GM12878 (cell line): ENCODE measurements at regions of chrX and their contacts with region 1.

Region 1: DNA sequence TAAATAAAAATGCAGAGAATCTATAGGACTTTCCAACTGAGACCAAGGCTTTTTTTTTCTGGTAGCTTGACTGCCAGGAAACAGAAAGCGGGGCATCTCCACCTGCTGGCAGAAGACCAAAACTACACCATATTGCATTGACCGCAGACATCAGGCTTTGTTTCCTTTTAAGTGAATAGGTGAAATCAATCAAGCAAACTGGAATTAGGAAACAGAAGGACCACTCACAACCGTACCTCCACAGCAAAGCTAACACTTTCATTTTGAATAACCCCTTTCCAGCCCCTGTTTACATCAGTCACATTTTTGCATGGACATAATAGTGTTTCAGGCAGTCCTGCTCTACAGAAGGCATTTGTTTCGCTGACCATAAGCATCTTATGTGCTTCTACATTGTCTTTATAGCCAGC is 218.2 kb downstream of the IDS start:
- DNase-seq: peak; percentile 40
- ATAC-seq: peak; percentile 76
- H3K4me3 ChIP-seq: no peak overlapping the region
- H3K27ac ChIP-seq: no peak overlapping the region
- H3K4me1 ChIP-seq: no peaks in the 10 kb centered on the region
- H3K27me3 ChIP-seq: no peaks in the 10 kb centered on the region
- CTCF ChIP-seq: peak; percentile 73 to 85 (median 73)
- EP300 ChIP-seq: no peak
- POLR2A ChIP-seq: no peak
- RAD21 ChIP-seq: peak; percentile 83

Region 2: DNA sequence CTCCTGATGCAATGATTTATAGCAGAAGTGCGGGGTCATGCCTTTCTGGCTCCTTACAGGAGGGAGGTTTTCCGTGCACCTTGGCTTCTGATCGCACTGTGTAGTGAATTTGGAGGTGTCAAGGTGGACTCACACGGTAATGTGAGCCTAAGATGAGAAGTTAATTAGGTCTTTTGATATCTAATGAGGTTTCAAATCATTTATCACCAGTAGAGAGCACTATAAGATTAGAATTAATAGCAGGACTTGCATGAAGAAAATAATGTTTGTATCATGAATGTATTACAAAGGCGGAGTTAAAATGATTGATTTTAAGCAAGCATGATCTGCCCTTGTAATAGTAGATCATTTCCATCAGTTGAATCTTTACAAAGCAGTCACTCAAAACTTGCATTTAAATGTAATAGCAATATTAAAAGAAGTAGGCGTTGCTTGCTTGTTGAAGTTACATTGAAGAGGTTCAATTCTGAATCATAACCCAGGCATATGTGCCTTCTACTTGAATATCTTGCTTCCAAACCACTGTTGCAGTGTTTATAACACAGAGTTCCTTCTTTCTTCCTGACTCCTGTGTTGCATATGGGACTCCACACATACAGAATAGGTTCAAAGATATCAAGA is 1153.7 kb before region 1 on chrX:
- CTCF ChIA-PET with region 1: no interaction called
- POLR2A ChIA-PET with region 1: no interaction called
- RAD21 ChIA-PET with region 1: interaction called, 4 read pairs
- SMC1A ChIA-PET with region 1: no interaction called
- in situ Hi-C with region 1: no loop called
- intact Hi-C with region 1: loop called (anchors 10 kb)
- DNase-seq: no peak
- ATAC-seq: no peak
- H3K4me3 ChIP-seq: no peak overlapping the region
- H3K27ac ChIP-seq: no peak overlapping the region
- H3K4me1 ChIP-seq: no peaks in the 10 kb centered on the region
- H3K27me3 ChIP-seq: no peaks in the 10 kb centered on the region
- CTCF ChIP-seq: no peak; a peak in 1 of 6 replicates
- EP300 ChIP-seq: no peak
- POLR2A ChIP-seq: no peak
- RAD21 ChIP-seq: 0 out of 2 replicates have a peak, but pooled peaks have one; percentile 20

Region 3: GRCh38 chrX:148629434-148629833 is 657.5 kb before region 1 on chrX:
- CTCF ChIA-PET with region 1: no interaction called
- POLR2A ChIA-PET with region 1: no interaction called
- RAD21 ChIA-PET with region 1: no interaction called
- SMC1A ChIA-PET with region 1: no interaction called
- in situ Hi-C with region 1: no loop called
- intact Hi-C with region 1: no loop called
- DNase-seq: no peak
- ATAC-seq: no peak
- H3K4me3 ChIP-seq: no peak overlapping the region
- H3K27ac ChIP-seq: no peak overlapping the region
- H3K4me1 ChIP-seq: no peaks in the 10 kb centered on the region
- H3K27me3 ChIP-seq: no peaks in the 10 kb centered on the region
- CTCF ChIP-seq: no peak
- EP300 ChIP-seq: no peak
- POLR2A ChIP-seq: no peak
- RAD21 ChIP-seq: no peak

Region 4: DNA sequence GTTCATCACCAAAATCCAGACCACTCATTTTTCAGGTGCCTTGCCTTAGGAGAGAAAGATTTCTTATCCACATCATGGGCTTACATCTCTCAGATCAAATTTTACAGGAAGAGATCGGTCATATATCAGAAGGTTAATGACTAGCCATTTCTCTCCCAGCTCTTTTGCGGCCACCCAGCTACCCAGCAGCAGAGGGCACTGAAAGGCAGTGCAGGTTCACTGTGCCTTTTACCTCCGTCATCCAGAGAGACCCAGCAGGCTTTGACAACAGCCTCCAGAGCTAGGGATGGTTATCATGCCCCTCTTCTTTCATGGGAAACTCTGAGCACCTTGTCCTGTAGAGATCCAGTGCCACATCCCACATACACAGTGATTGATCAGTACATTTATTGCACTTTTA is 401.7 kb before region 1 on chrX:
- CTCF ChIA-PET with region 1: interaction called, 32 read pairs
- POLR2A ChIA-PET with region 1: no interaction called
- RAD21 ChIA-PET with region 1: interaction called, 22 read pairs
- SMC1A ChIA-PET with region 1: interaction called, 45 read pairs
- in situ Hi-C with region 1: no loop called
- intact Hi-C with region 1: loop called (anchors 5 kb)
- DNase-seq: no peak
- ATAC-seq: peak; percentile 61
- H3K4me3 ChIP-seq: no peak overlapping the region
- H3K27ac ChIP-seq: no peak overlapping the region
- H3K4me1 ChIP-seq: no peaks in the 10 kb centered on the region
- H3K27me3 ChIP-seq: no peaks in the 10 kb centered on the region
- CTCF ChIP-seq: peak in 1 of 3 experiments; percentile 27; a peak in 3 of 6 replicates
- EP300 ChIP-seq: no peak
- POLR2A ChIP-seq: no peak
- RAD21 ChIP-seq: peak; percentile 44

Region 5: GRCh38 chrX:149145845-149146285 is 141.1 kb before region 1 on chrX:
- CTCF ChIA-PET with region 1: interaction called, 12 read pairs
- POLR2A ChIA-PET with region 1: interaction called, 3 read pairs
- RAD21 ChIA-PET with region 1: interaction called, 20 read pairs
- SMC1A ChIA-PET with region 1: interaction called, 21 read pairs
- in situ Hi-C with region 1: no loop called
- intact Hi-C with region 1: loop called (anchors 5 kb)
- DNase-seq: no peak
- ATAC-seq: peak; percentile 92
- H3K4me3 ChIP-seq: no peak overlapping the region
- H3K27ac ChIP-seq: no peak overlapping the region
- H3K4me1 ChIP-seq: no peaks in the 10 kb centered on the region
- H3K27me3 ChIP-seq: no peaks in the 10 kb centered on the region
- CTCF ChIP-seq: no peak
- EP300 ChIP-seq: peak in 1 of 2 experiments; percentile 17; a peak in 1 of 4 replicates
- POLR2A ChIP-seq: no peak
- RAD21 ChIP-seq: no peak

Region 6: DNA sequence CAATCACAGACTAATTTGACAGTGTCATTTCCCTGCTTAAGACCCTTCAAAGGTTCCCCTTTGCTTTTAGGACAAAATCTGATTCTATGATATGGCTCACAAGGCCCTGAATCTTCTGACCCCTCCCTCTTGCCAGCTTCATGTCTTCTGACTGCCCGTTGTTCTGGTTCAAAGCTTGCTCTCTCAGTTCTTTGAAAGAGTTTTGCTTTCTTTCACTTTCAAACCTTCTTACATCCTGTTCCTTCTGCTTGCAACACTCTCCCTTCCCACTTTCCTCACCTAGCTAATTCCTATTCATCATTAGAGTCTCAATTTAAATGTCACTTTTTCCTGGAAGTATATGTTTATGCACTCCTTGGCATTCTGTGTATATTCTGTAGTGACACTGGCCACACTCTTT is 81.0 kb before region 1 on chrX:
- CTCF ChIA-PET with region 1: interaction called, 19 read pairs
- POLR2A ChIA-PET with region 1: interaction called, 10 read pairs
- RAD21 ChIA-PET with region 1: interaction called, 47 read pairs
- SMC1A ChIA-PET with region 1: interaction called, 54 read pairs
- in situ Hi-C with region 1: no loop called
- intact Hi-C with region 1: loop called (anchors 2 kb)
- DNase-seq: no peak
- ATAC-seq: peak; percentile 59
- H3K4me3 ChIP-seq: no peak overlapping the region
- H3K27ac ChIP-seq: peak overlapping the region; percentile 49; the same call in 1 of the 2 replicates
- H3K4me1 ChIP-seq: no peaks in the 10 kb centered on the region
- H3K27me3 ChIP-seq: no peaks in the 10 kb centered on the region
- CTCF ChIP-seq: no peak
- EP300 ChIP-seq: no peak
- POLR2A ChIP-seq: no peak
- RAD21 ChIP-seq: no peak

Region 7: GRCh38 chrX:149470955-149471354 is 184.0 kb after region 1 on chrX:
- CTCF ChIA-PET with region 1: interaction called, 5 read pairs
- POLR2A ChIA-PET with region 1: no interaction called
- RAD21 ChIA-PET with region 1: interaction called, 4 read pairs
- SMC1A ChIA-PET with region 1: interaction called, 10 read pairs
- in situ Hi-C with region 1: no loop called
- intact Hi-C with region 1: no loop called
- DNase-seq: no peak
- ATAC-seq: peak; percentile 97
- H3K4me3 ChIP-seq: no peak overlapping the region
- H3K27ac ChIP-seq: no peak overlapping the region
- H3K4me1 ChIP-seq: no peaks in the 10 kb centered on the region
- H3K27me3 ChIP-seq: no peaks in the 10 kb centered on the region; a peak in 1 of 4 replicates
- CTCF ChIP-seq: peak; percentile 80 to 94 (median 93)
- EP300 ChIP-seq: no peak
- POLR2A ChIP-seq: no peak
- RAD21 ChIP-seq: peak; percentile 86

Region 8: DNA sequence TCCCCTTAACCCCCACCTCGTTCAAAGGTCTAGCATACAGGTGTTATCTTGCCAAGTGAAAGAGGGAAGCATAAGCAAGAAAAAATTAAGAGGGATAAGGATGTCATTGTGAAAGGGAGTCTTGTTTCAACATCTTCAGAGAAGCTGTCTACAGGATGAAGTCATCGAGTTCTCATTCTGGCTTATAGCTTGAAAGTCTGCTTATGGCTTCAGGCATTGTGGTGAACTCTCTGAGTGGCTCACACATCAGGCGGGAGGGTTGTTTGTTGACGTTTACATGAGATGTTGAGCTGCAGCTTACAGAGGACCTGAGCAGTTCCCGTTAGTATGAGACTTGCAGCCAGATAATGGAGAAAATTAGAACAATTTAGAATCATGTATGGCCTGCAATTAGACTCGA is 283.7 kb after region 1 on chrX:
- CTCF ChIA-PET with region 1: no interaction called
- POLR2A ChIA-PET with region 1: no interaction called
- RAD21 ChIA-PET with region 1: no interaction called
- SMC1A ChIA-PET with region 1: no interaction called
- in situ Hi-C with region 1: no loop called
- intact Hi-C with region 1: no loop called
- DNase-seq: no peak
- ATAC-seq: no peak
- H3K4me3 ChIP-seq: no peak overlapping the region
- H3K27ac ChIP-seq: no peak overlapping the region
- H3K4me1 ChIP-seq: no peaks in the 10 kb centered on the region
- H3K27me3 ChIP-seq: no peaks in the 10 kb centered on the region
- CTCF ChIP-seq: no peak
- EP300 ChIP-seq: no peak
- POLR2A ChIP-seq: no peak
- RAD21 ChIP-seq: no peak